ENCODE measurements at regions of chr6 and their contacts with region 1.

Region 1: DNA sequence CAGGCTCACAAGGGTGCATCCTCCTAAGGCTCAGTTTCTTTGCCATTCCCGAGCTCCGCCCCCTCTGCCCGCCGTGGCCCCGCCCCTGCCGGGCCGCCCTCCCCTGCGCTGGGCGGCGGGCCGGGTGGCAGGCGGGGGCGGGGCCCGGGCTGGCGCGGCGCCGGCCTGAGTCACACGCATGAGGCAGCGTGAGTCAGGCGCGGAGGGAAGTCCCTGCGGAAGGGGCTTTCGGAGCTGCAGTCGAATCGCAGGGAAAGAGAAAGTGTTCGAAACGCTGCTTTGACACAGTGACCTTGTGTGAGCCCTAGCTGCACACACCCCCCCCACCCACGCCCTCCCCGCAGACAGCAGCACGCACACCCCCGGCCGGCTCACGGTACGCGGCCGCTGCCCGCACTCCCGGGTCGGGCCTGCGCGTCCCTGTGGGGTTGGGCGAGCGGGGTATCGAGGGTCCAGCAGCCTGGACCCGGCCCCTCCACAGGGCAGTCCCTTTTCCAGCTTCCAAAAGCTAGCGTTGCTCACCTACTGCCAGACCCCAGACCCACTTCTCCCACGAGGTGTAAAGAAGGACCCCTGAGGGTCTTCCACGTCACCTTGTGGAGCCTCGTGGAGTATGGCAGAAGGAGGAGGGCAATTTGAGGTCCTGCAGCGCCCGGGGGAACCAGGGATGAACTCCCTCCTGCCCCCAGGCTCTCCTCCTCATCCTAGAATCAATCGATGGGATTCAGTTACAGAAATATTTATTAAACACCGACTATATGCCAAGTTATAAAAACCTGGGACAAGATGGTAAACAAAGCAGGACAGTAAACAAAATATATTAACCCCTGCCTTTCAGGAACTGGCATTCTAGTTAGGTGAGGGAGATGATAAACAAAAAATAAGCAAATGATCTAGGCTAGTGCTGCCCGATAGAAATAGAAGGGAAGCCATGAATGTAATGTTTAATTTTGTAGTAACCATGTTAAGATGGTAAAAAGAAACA is 12.4 kb upstream of the HMGA1 start:
- DNase-seq: peak; percentile 96
- H3K4me3 Mint-ChIP-seq: peak overlapping the region; percentile 52
- H3K27ac Mint-ChIP-seq: peak overlapping the region; percentile 72
- H3K4me1 Mint-ChIP-seq: peaks cover 35% of the 10 kb centered on the region
- H3K27me3 Mint-ChIP-seq: no peaks in the 10 kb centered on the region

Region 2: DNA sequence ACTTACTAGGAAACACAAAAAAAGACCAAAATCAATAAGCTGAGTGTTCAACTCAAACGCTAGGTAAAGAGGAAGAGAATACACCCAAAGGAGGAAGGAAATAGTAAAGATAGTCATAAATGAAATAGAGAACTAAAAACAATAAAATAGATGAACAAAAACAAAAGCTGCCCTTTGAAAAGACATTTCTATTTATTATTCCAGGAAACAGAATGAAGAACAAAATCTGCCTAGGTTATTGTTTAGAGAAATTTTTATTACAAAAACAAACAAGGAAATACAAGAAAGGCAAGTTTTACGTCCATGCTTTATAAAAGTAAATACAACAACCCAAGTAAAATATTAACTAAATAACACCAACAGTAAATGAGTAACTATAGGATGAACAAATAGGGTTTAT is 1303.5 kb before region 1 on chr6:
- CTCF ChIA-PET with region 1: no interaction called
- POLR2A ChIA-PET with region 1: no interaction called
- intact Hi-C with region 1: no loop called
- DNase-seq: no peak
- H3K4me3 Mint-ChIP-seq: no peak overlapping the region
- H3K27ac Mint-ChIP-seq: no peak overlapping the region
- H3K4me1 Mint-ChIP-seq: peaks cover 4% of the 10 kb centered on the region
- H3K27me3 Mint-ChIP-seq: peaks cover 4% of the 10 kb centered on the region

Region 3: DNA sequence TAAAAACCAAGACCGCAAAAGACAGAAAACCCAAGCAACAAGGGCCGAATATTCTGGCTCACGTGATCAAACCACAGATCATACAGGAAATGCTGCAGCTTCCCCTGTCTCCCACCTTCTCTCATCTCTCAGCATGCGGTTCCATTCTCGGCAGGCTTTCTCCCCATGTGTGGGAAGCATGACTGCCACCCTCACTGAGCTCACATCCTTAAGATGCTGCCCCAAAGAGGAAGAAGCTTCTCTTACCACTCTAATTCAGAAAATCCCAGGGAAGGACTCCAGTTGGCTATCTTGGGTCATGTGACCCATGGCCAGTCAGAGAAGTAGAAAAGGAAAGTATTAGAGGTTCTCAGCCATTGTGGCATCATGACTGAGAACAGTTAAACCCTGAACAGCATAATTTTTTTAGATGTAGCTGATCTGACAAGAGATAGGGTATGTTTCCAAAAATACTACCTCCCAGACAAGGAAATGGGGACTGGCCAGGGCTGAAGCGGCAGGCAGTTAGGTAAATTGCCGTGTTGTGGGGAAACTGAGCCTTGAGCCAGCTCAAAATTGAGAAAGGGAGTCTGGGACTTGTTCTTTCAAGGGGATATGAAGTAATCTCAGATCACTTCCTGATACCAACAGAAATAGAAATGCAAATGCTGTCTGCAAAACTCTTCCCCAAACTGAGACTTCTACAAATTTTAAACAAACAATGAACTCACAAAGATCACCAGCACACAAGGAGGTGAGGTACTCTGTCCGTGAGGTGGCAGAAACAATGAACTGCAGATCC is 41.3 kb before region 1 on chr6:
- CTCF ChIA-PET with region 1: interaction called, 7 read pairs
- POLR2A ChIA-PET with region 1: interaction called, 7 read pairs
- intact Hi-C with region 1: loop called (anchors 1 kb)
- DNase-seq: peak; percentile 87
- H3K4me3 Mint-ChIP-seq: peak overlapping the region; percentile 65
- H3K27ac Mint-ChIP-seq: peak overlapping the region; percentile 81
- H3K4me1 Mint-ChIP-seq: peaks cover 16% of the 10 kb centered on the region
- H3K27me3 Mint-ChIP-seq: no peaks in the 10 kb centered on the region

Region 4: GRCh38 chr6:34236131-34236996 is 12.1 kb after region 1 on chr6 and contains the start of gene HMGA1:
- CTCF ChIA-PET with region 1: interaction called, 3 read pairs
- POLR2A ChIA-PET with region 1: interaction called, 29 read pairs
- intact Hi-C with region 1: no loop called
- DNase-seq: peak; percentile 91
- H3K4me3 Mint-ChIP-seq: peak within 1 kb of the TSS; percentile 88
- H3K27ac Mint-ChIP-seq: peak within 1 kb of the TSS; percentile 93
- H3K4me1 Mint-ChIP-seq: peaks cover 41% of the 10 kb centered on the region
- H3K27me3 Mint-ChIP-seq: no peaks in the 10 kb centered on the region
- total RNA-seq, gene HMGA1: 422 to 429 TPM

Measured in activated CD4-positive, alpha-beta memory T cell treated with anti-CD3 and anti-CD28 coated beads for 36 hours (primary cell).